HEK293 (cell line): ENCODE measurements at regions of chr17 and their contacts with region 1.

Region 1: DNA sequence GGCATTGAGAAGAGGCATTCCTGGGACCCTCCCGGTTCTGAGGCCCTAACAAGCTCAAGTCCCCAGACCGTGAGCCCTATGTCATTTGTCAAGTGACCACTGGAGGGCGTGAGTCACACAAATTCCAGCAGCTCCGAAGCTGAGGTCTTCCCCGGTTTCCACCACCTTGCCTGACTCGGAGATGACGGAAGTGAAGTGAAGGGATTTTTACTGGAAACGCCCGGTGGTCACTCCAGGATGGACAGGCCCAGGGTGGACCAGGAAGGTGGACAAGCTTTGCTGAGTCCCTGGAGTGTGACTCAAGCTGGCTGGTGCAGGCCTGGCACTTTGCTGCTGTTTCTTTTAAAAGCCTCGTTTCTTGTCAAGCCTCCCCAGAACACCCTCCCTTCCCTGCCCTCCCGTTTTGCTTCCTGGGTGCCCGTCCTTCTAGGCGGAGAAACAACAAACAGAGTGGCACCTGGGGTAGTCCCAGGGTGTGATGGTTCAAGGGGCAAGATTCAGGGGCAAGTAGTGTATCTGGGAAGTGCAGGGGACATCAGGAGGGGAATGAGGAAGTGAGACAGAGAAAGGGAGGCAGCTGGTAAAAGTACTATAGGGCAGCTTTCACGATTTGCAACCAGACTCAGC is 5.3 kb upstream of the NOS2 start:
- H3K4me3 ChIP-seq: peak overlapping the region; percentile 5
- H3K27ac ChIP-seq: no peak overlapping the region
- H3K4me1 ChIP-seq: no peaks in the 10 kb centered on the region
- CTCF ChIP-seq: peak; percentile 74; the same call in 1 of the 2 replicates

Region 2: DNA sequence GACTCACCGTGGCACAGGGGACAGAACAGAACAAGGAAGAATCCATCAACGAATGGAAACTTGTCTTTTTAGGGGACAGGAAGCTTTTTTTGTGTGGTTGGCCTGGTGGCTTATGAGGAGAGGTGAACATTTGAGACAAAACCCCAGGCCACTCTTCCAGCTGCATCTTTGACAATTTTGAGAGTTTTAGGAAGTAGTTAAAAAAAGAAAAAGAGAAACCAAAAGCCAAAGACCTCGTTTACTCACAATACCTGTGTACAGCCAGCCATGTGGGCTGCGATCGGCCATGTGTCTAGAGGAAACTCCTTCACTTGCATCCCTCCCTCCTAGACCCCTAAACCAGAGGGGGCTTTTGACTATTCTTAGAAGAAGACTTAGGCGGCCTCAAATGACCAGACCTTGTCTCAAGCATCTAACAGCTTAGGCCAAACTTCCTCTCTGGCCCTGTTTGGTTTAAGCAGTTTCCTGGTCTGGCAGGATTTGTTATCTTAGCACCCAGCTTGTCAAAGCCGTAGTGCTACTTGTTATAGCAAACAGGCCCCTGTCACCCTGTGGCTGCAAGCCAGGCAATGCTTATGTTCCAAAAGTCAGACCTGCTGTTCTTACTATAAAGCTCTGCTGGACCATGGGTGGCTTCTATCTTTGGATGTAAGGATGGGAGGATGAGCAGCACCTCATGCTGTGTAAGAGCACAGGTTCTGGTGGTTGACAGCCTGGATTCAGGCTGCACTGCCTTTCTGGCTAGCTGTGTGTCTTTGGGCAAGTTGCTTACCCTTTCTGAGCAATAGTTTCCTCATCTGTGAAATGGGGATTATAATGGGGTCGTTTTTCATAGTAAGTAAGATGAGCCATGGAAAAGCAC is 331.7 kb before region 1 on chr17:
- CTCF ChIA-PET with region 1: no interaction called
- POLR2A ChIA-PET with region 1: no interaction called
- H3K4me3 ChIP-seq: no peak overlapping the region
- H3K27ac ChIP-seq: no peak overlapping the region
- H3K4me1 ChIP-seq: peaks cover 18% of the 10 kb centered on the region
- CTCF ChIP-seq: no peak

Region 3: DNA sequence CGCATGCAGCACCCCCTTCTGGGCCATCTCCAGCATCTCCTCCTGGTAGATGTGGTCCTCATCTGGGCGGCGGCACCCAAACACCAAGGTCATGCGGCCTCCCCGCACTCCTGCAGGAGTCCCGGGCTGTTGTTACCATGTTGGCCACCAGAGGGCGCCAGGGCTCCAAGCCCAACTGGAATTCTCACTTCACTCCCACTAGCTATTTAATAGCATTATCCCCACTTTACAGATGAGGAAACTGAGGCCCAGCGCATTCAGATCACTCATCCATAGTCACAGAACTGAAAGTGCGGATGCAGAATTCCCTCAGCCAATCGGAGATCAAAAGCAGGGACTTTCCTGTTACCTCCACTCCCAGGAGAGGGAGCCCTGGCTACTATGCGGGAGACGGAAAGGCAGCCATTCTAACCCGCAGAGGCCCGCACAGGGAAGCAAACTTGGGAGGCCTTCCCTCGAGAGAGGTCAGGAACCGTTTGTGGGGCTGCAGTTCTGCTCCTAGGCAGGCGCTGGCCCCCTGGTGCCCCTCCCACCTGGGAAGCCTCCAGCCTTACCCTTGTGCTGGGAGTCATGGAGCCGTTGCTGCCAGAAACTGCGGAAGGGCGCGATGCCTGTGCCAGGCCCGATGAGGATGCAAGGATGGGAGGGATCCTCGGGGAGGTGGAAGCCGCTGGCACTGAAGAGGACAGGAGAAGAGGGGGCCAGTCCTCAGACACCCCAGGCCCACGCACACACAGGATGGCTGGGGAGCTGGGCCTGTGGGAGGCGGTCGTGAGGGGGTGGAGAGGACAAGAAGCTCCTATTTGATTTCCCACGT is 45.4 kb before region 1 on chr17:
- CTCF ChIA-PET with region 1: interaction called, 20 read pairs
- POLR2A ChIA-PET with region 1: no interaction called
- H3K4me3 ChIP-seq: no peak overlapping the region
- H3K27ac ChIP-seq: no peak overlapping the region
- H3K4me1 ChIP-seq: no peaks in the 10 kb centered on the region
- CTCF ChIP-seq: peak; percentile 87

Region 4: GRCh38 chr17:27818401-27819105 is 12.9 kb after region 1 on chr17:
- CTCF ChIA-PET with region 1: interaction called, 23 read pairs
- POLR2A ChIA-PET with region 1: no interaction called
- H3K4me3 ChIP-seq: no peak overlapping the region
- H3K27ac ChIP-seq: no peak overlapping the region
- H3K4me1 ChIP-seq: no peaks in the 10 kb centered on the region
- CTCF ChIP-seq: no peak

Region 5: DNA sequence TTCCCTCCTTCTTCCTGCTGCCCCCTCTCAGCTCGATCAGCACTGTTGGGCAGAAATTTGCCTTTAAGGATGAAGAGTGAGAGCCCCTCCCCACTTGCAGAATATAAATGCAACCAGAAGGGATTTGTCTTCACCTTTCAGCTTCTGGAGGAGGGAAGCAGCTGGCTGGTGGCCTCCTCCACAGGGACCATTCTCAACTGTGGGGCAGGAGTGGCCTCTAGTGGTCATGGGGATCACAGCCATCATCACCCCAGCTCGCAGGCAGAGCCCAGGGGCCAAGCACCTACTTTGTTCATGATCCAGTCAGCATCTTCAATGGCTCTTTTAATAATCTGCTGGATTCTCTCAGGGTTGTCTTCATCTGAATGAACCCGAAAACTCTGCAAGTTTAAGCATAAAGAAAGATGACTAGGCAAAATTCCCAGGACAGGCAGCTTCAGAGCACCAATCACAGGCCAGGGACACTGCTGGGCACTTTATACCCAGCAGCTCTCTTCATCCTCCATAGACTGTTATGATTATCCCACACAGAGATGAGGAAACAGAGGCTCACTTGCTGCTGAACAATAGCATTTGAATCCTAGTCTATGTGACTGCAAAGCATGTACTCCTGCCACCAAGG is 74.5 kb after region 1 on chr17:
- CTCF ChIA-PET with region 1: interaction called, 327 read pairs
- POLR2A ChIA-PET with region 1: interaction called, 8 read pairs
- H3K4me3 ChIP-seq: no peak overlapping the region
- H3K27ac ChIP-seq: no peak overlapping the region
- H3K4me1 ChIP-seq: no peaks in the 10 kb centered on the region
- CTCF ChIP-seq: peak; percentile 73

Region 6: GRCh38 chr17:28252436-28252835 is 446.8 kb after region 1 on chr17:
- CTCF ChIA-PET with region 1: interaction called, 21 read pairs
- POLR2A ChIA-PET with region 1: no interaction called
- H3K4me3 ChIP-seq: no peak overlapping the region
- H3K27ac ChIP-seq: no peak overlapping the region
- H3K4me1 ChIP-seq: no peaks in the 10 kb centered on the region
- CTCF ChIP-seq: no peak